ENCODE measurements at regions of chr19 and their contacts with region 1.

Region 1: GRCh38 chr19:41531438-41532311 is 44.3 kb upstream of the CEACAM21 start:
- DNase-seq: peak; percentile 64
- ATAC-seq: peak; percentile 78
- H3K4me3 Mint-ChIP-seq: peak overlapping the region; percentile 76
- H3K27ac Mint-ChIP-seq: peak overlapping the region; percentile 86
- H3K4me1 Mint-ChIP-seq: peaks cover 84% of the 10 kb centered on the region
- H3K27me3 Mint-ChIP-seq: no peaks in the 10 kb centered on the region
- CTCF ChIP-seq: no peak

Region 2: GRCh38 chr19:41439441-41440222 is 92.0 kb before region 1 on chr19 and contains the start of gene DMAC2:
- CTCF ChIA-PET with region 1: no interaction called
- POLR2A ChIA-PET with region 1: interaction called, 11 read pairs
- intact Hi-C with region 1: no loop called
- DNase-seq: peak; percentile 78
- ATAC-seq: peak; percentile 97
- H3K4me3 Mint-ChIP-seq: no peak within 1 kb of the TSS
- H3K27ac Mint-ChIP-seq: no peak within 1 kb of the TSS
- H3K4me1 Mint-ChIP-seq: peaks cover 7% of the 10 kb centered on the region
- H3K27me3 Mint-ChIP-seq: no peaks in the 10 kb centered on the region
- CTCF ChIP-seq: no peak
- total RNA-seq, gene DMAC2: 38.2 and 45.7 TPM in 2 replicates

Region 3: GRCh38 chr19:41462497-41462896 is 69.2 kb before region 1 on chr19:
- CTCF ChIA-PET with region 1: no interaction called
- POLR2A ChIA-PET with region 1: no interaction called
- intact Hi-C with region 1: loop called (anchors 2 kb)
- DNase-seq: no peak
- ATAC-seq: no peak
- H3K4me3 Mint-ChIP-seq: peak overlapping the region; percentile 7
- H3K27ac Mint-ChIP-seq: peak overlapping the region; percentile 93
- H3K4me1 Mint-ChIP-seq: peaks cover 31% of the 10 kb centered on the region
- H3K27me3 Mint-ChIP-seq: peaks cover 16% of the 10 kb centered on the region
- CTCF ChIP-seq: no peak

Region 4: GRCh38 chr19:41548954-41549688 is 17.4 kb after region 1 on chr19:
- CTCF ChIA-PET with region 1: interaction called, 9 read pairs
- POLR2A ChIA-PET with region 1: interaction called, 72 read pairs
- intact Hi-C with region 1: loop called (anchors 1 kb)
- DNase-seq: no peak
- ATAC-seq: peak; percentile 58
- H3K4me3 Mint-ChIP-seq: peak overlapping the region; percentile 97
- H3K27ac Mint-ChIP-seq: peak overlapping the region; percentile 99
- H3K4me1 Mint-ChIP-seq: peaks cover 92% of the 10 kb centered on the region
- H3K27me3 Mint-ChIP-seq: no peaks in the 10 kb centered on the region
- CTCF ChIP-seq: no peak

Region 5: GRCh38 chr19:41554907-41555306 is 23.2 kb after region 1 on chr19:
- CTCF ChIA-PET with region 1: interaction called, 6 read pairs
- POLR2A ChIA-PET with region 1: interaction called, 72 read pairs
- intact Hi-C with region 1: no loop called
- DNase-seq: no peak
- ATAC-seq: no peak
- H3K4me3 Mint-ChIP-seq: peak overlapping the region; percentile 76
- H3K27ac Mint-ChIP-seq: peak overlapping the region; percentile 83
- H3K4me1 Mint-ChIP-seq: peaks cover 90% of the 10 kb centered on the region
- H3K27me3 Mint-ChIP-seq: no peaks in the 10 kb centered on the region
- CTCF ChIP-seq: no peak

Measured in activated B cell treated with CpG ODN at 0.5 μM for 24 hours (primary cell).